ENCODE measurements at regions of chr13 and their contacts with region 1.

Region 1: GRCh38 chr13:35953537-35954206 is 177.5 kb downstream of the DCLK1 start:
- DNase-seq: peak; percentile 64
- H3K4me3 Mint-ChIP-seq: no peak overlapping the region
- H3K27ac Mint-ChIP-seq: no peak overlapping the region
- H3K4me1 Mint-ChIP-seq: no peaks in the 10 kb centered on the region
- H3K27me3 Mint-ChIP-seq: peaks cover 17% of the 10 kb centered on the region
- CTCF ChIP-seq: peak; percentile 47

Region 2: GRCh38 chr13:35630551-35631275 is 323.0 kb before region 1 on chr13:
- CTCF ChIA-PET with region 1: no interaction called
- POLR2A ChIA-PET with region 1: no interaction called
- intact Hi-C with region 1: loop called (anchors 1 kb)
- DNase-seq: peak; percentile 66
- H3K4me3 Mint-ChIP-seq: no peak overlapping the region
- H3K27ac Mint-ChIP-seq: no peak overlapping the region
- H3K4me1 Mint-ChIP-seq: no peaks in the 10 kb centered on the region
- H3K27me3 Mint-ChIP-seq: no peaks in the 10 kb centered on the region
- CTCF ChIP-seq: peak; percentile 65

Region 3: DNA sequence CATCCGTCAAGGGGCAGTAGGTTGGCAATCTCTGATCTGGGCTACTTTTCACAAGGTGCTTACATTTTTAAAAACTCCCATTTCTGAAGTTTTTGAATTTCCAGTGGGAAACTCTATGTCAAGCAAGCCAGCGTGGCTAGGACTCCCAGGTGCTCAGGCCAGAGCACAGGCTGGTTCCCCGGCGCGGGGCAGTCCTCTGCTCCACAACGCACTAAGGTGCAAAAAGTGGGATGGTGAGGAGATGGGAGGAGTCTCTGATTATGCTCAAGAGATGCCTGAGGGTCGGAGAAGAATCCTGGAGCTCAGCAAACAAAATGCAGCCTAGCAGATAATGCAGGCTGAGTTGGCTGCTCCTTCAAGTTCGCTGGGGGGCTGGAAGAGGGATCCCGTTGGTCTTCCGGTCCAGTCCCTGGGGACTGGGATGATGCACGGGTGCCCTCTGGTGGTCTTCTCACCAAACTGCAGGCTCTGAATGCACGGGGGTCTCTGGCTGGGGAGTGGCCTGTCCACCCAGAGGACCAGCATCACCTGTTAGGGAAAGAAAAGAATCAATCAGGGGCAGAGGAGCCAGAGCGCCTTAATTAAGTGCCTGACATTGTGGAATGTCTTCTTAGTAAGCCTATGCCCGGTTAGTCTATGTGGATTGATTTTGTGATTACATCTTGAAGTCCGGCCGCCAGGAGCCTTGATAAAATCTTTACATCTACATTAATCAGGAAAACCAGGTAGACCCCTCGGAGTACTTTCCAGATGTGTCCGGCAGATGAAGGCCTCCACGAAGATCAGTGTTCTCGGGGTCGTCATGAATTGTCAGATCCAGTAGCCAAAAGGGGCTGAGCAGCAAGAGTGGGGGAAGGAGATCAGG is 232.8 kb before region 1 on chr13:
- CTCF ChIA-PET with region 1: interaction called, 9 read pairs
- POLR2A ChIA-PET with region 1: no interaction called
- intact Hi-C with region 1: loop called (anchors 5 kb)
- DNase-seq: peak; percentile 59
- H3K4me3 Mint-ChIP-seq: peak overlapping the region; percentile 46
- H3K27ac Mint-ChIP-seq: no peak overlapping the region
- H3K4me1 Mint-ChIP-seq: peaks cover 5% of the 10 kb centered on the region
- H3K27me3 Mint-ChIP-seq: no peaks in the 10 kb centered on the region
- CTCF ChIP-seq: peak; percentile 94

Region 4: GRCh38 chr13:35818633-35819067 is 135.0 kb before region 1 on chr13:
- CTCF ChIA-PET with region 1: no interaction called
- POLR2A ChIA-PET with region 1: interaction called, 3 read pairs
- intact Hi-C with region 1: loop called (anchors 1 kb)
- DNase-seq: peak; percentile 45
- H3K4me3 Mint-ChIP-seq: no peak overlapping the region
- H3K27ac Mint-ChIP-seq: no peak overlapping the region
- H3K4me1 Mint-ChIP-seq: no peaks in the 10 kb centered on the region
- H3K27me3 Mint-ChIP-seq: no peaks in the 10 kb centered on the region
- CTCF ChIP-seq: peak; percentile 53

Region 5: DNA sequence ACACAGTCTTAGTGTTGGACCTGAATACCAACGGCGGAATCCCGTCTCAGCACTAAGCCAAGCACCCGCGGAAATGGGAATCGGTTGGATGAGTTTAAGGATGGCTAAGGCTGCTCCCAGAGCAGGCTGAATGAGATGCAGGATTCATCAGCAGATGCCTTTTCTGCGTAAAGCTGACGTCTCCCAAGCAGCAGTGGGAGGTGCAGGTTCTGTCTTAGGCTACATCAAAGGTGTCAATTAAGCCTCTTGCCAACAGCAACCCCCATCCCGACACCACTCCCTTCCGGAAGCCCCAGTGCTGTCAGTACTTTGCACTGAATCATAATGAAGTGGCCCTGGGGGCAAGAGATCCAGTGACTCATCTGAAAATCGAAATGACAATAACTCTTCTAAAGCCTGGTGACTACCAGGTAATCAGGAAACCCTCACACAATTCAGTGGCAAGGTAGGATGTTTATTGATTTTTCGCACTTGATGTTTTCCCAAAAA is 98.1 kb before region 1 on chr13:
- CTCF ChIA-PET with region 1: interaction called, 3 read pairs
- POLR2A ChIA-PET with region 1: no interaction called
- intact Hi-C with region 1: loop called (anchors 10 kb)
- DNase-seq: peak; percentile 85
- H3K4me3 Mint-ChIP-seq: no peak overlapping the region
- H3K27ac Mint-ChIP-seq: no peak overlapping the region
- H3K4me1 Mint-ChIP-seq: peaks cover 12% of the 10 kb centered on the region
- H3K27me3 Mint-ChIP-seq: no peaks in the 10 kb centered on the region
- CTCF ChIP-seq: no peak

Region 6: GRCh38 chr13:35964868-35965190 is 11.2 kb after region 1 on chr13:
- CTCF ChIA-PET with region 1: no interaction called
- POLR2A ChIA-PET with region 1: no interaction called
- intact Hi-C with region 1: no loop called
- DNase-seq: peak; percentile 75
- H3K4me3 Mint-ChIP-seq: no peak overlapping the region
- H3K27ac Mint-ChIP-seq: no peak overlapping the region
- H3K4me1 Mint-ChIP-seq: no peaks in the 10 kb centered on the region
- H3K27me3 Mint-ChIP-seq: no peaks in the 10 kb centered on the region
- CTCF ChIP-seq: no peak